ENCODE measurements at regions of chr5 and their contacts with region 1.

Region 1: DNA sequence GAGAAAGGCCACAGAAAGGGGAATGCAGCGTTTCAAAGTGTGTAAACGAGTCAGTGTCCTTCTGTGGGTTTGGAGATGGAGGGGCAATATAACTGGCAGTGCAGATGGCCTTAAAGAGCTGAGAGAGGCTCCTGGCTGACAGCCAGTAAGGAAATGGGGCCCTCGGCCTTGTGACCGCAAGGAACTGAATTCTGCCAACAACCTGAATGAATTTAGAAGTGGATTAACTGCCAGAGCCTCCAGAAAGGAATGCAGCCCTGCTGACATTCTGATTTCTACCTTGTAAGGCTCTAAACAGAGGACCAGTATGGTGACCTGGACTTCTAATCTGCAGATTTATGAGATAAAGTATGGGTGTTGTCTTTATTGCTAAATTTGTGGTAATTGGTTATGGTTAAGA is 17.5 kb upstream of the NREP start:
- DNase-seq: peak; percentile 34
- H3K4me3 ChIP-seq: no peak overlapping the region
- H3K27ac ChIP-seq: peak overlapping the region in 1 of 2 donors; percentile 13
- H3K4me1 ChIP-seq: no peaks in the 10 kb centered on the region
- H3K27me3 ChIP-seq: no peaks in the 10 kb centered on the region
- CTCF ChIP-seq: no peak
- POLR2A ChIP-seq: no peak

Region 2: DNA sequence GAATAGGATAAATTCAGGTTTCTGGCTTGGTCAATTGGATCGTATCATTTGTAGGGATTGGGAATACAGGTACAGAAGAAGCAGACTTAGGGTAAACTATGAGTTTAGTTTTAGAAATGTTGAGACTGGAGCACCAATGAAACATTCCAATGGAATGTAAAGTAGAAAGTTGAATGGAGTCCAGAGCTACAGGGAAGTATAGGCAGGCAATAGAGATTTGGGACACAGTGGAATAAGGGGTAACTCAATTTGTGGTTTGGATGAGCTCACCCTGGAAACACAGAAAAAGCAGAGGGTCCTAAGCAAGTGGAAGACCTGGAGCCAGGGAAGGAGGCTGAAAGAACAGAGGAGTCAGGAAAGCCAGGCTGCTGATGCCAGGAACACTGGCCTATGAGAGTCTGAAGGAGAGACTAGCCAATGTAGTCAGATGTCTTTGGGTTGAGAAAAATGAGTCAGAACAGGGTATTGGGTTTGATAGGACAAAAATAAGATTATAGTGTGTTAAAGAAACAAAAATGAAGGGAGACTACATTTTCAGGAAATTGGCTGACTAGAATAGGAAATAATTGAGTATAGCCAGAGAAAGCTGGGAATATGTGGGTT is 335.0 kb before region 1 on chr5:
- intact Hi-C with region 1: no loop called
- DNase-seq: no peak
- H3K4me3 ChIP-seq: no peak overlapping the region
- H3K27ac ChIP-seq: no peak overlapping the region
- H3K4me1 ChIP-seq: no peaks in the 10 kb centered on the region
- H3K27me3 ChIP-seq: no peaks in the 10 kb centered on the region
- CTCF ChIP-seq: no peak
- POLR2A ChIP-seq: no peak

Region 3: GRCh38 chr5:111735583-111736270 is 38.8 kb before region 1 on chr5:
- intact Hi-C with region 1: loop called (anchors 2 kb)
- DNase-seq: no peak
- H3K4me3 ChIP-seq: no peak overlapping the region
- H3K27ac ChIP-seq: no peak overlapping the region
- H3K4me1 ChIP-seq: no peaks in the 10 kb centered on the region
- H3K27me3 ChIP-seq: no peaks in the 10 kb centered on the region
- CTCF ChIP-seq: no peak
- POLR2A ChIP-seq: no peak

Region 4: GRCh38 chr5:112025757-112026156 is 251.2 kb after region 1 on chr5:
- intact Hi-C with region 1: loop called (anchors 5 kb)
- DNase-seq: no peak
- H3K4me3 ChIP-seq: no peak overlapping the region
- H3K27ac ChIP-seq: no peak overlapping the region
- H3K4me1 ChIP-seq: no peaks in the 10 kb centered on the region
- H3K27me3 ChIP-seq: no peaks in the 10 kb centered on the region
- CTCF ChIP-seq: no peak
- POLR2A ChIP-seq: no peak

Region 5: DNA sequence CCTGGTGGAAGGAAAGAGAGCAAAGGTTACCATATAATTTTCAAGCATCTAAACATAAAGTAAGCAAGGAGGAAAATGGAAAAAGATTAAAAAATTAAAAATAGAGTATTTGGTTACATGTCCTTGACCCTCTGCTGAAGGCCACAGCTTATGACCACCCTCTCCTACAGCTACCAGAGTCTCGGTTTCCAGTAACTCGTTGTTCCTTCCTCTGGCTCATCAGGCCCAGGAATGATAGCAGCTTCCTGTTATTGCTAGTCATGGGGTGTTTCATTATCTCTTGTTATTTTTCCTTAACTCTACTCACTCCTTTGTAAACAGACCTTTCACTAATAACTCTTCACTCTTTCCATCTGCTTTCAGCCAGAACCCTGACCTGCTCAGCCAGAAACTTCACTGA is 1841.2 kb after region 1 on chr5:
- intact Hi-C with region 1: no loop called
- DNase-seq: no peak
- H3K4me3 ChIP-seq: no peak overlapping the region
- H3K27ac ChIP-seq: no peak overlapping the region
- H3K4me1 ChIP-seq: no peaks in the 10 kb centered on the region
- H3K27me3 ChIP-seq: no peaks in the 10 kb centered on the region
- CTCF ChIP-seq: no peak
- POLR2A ChIP-seq: no peak